Heart right ventricle (tissue), 16 donors: ENCODE measurements at regions of chr16 and their contacts with region 1.

Region 1: DNA sequence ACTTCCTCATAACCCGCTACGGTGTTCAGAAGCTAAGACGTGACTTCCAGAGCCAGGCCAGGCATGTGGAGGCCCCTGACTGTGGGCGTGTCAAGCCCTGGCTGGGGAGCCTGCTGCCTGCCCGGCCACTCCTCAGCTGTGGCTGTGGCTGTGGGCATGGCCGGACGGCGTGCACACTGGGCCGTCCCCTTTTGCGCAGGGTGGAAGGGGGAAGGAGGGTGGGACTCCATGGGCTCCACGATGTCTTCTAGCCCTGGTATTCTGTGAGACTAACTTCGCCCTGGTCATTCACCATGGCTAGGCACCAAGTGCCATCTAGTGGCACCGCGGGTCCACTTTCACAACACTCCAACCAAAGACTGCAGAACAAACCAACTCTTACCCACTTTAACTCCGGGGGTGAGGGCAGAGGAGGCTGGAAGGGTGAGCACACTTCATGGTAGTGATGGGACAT is 67.9 kb downstream of the N4BP1 start:
- DNase-seq: peak; percentile 35 to 37
- ATAC-seq: peak; percentile 50 to 77 (median 68)
- H3K4me3 ChIP-seq: no peak overlapping the region
- H3K27ac ChIP-seq: peak overlapping the region in 2 of 10 donors; percentile 4 to 19
- H3K4me1 ChIP-seq: peaks cover 15 to 50% (median 27%) of the 10 kb centered on the region in 9 donors
- H3K27me3 ChIP-seq: no peaks in the 10 kb centered on the region
- CTCF ChIP-seq: peak; percentile 27 to 72 (median 60)

Region 2: GRCh38 chr16:48276102-48276501 is 265.9 kb before region 1 on chr16:
- intact Hi-C with region 1: loop called in 2 of 10 experiments (anchors 10 kb)
- DNase-seq: no peak
- ATAC-seq: peak in 4 of 8 donors; percentile 26 to 60 (median 44)
- H3K4me3 ChIP-seq: no peak overlapping the region
- H3K27ac ChIP-seq: peak overlapping the region in 4 of 10 donors; percentile 27 to 67 (median 50)
- H3K4me1 ChIP-seq: peaks cover 8 to 74% (median 59%) of the 10 kb centered on the region in 9 donors
- H3K27me3 ChIP-seq: no peaks in the 10 kb centered on the region
- CTCF ChIP-seq: no peak

Region 3: DNA sequence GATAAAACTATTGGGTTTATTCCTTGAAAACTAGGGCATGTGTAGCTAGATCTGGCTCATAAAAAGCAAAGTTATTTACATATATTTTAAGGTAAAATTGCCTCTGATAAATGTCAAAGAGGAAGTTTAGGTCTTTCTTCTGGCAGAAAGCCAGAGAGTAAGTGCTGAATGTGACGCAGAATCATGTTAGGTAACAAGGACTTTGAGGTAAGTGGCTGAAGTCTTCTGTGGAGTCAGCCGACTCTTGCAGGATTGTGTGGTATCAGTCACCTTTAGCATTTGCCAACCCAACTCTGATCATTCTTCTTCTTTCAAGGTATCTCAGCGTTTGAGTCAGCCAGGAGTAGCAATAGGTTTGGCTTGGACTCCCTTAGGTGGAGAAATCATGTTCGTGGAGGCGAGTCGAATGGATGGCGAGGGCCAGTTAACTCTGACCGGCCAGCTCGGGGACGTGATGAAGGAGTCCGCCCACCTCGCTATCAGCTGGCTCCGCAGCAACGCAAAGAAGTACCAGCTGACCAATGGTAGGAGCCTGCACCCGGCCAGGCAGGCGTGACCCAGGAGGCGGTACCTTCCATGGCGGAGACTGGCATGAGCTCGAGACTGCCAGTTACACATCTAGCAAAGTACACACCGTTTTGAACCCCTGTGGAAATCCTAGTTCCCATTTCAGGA is 194.7 kb before region 1 on chr16:
- intact Hi-C with region 1: loop called in 7 of 10 experiments (anchors 5 to 10 kb)
- DNase-seq: no peak
- ATAC-seq: peak in 2 of 8 donors; percentile 22 to 27
- H3K4me3 ChIP-seq: no peak overlapping the region
- H3K27ac ChIP-seq: no peak overlapping the region
- H3K4me1 ChIP-seq: peaks cover 0 to 4% (median 0%) of the 10 kb centered on the region in 9 donors
- H3K27me3 ChIP-seq: no peaks in the 10 kb centered on the region
- CTCF ChIP-seq: no peak

Region 4: GRCh38 chr16:48609652-48610029 is 67.6 kb after region 1 on chr16:
- intact Hi-C with region 1: loop called in 2 of 10 experiments (anchors 5 kb)
- DNase-seq: peak; percentile 55 to 78
- ATAC-seq: peak; percentile 47 to 83 (median 63)
- H3K4me3 ChIP-seq: peak overlapping the region; percentile 92 to 99 (median 98)
- H3K27ac ChIP-seq: peak overlapping the region; percentile 83 to 97 (median 92)
- H3K4me1 ChIP-seq: peaks cover 13 to 82% (median 69%) of the 10 kb centered on the region in 9 donors
- H3K27me3 ChIP-seq: no peaks in the 10 kb centered on the region
- CTCF ChIP-seq: no peak